Panc1 (cell line): ENCODE measurements at regions of chr6 and their contacts with region 1.

Region 1: DNA sequence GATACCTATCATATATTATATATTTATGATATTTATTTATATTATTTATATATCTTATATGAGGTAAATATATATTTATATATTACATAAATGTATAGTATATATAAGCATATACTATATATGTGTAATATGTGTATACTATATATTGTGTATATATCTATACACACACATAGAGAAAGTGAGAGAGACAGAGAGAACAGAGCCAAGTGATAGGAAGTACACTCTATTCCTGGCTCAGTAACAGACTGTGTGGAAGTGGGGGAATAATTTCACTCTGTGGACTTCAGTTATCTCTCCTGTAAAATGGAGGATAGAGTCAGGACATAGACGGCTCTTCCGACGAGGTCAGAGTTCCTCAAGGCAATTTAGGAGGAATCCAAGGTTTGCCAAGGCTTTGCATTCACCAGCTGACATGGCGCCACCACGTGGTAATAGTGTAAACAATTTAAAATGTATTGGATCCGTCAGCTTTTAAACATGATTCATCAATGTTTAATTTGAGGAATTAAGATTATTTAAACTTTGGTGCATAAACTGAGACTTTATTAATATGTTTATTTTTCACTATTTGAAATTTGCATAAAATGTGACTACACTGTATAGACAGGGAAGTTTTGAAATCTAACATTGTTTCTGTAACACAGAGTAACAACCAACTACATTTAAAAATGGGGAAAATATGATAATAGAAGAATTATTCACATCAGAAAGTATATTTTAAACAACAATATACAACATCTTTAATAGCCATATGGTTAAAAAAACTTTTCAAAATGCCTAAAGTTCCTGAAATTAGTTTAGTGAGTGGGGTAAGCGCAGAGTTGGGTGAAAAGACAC is 75.4 kb upstream of the TMEM244 start:
- DNase-seq: peak; percentile 25
- ATAC-seq: peak; percentile 82; the same call in 1 of the 2 replicates
- H3K4me3 ChIP-seq: 0 out of 4 replicates have a peak overlapping the region, but pooled peaks of 1 of the 2 experiments have one; percentile 24
- H3K27ac ChIP-seq: no peak overlapping the region
- H3K4me1 ChIP-seq: no peaks in the 10 kb centered on the region
- H3K27me3 ChIP-seq: peaks cover 2% of the 10 kb centered on the region
- CTCF ChIP-seq: peak; percentile 83

Region 2: GRCh38 chr6:129893640-129894039 is 42.9 kb before region 1 on chr6:
- CTCF ChIA-PET with region 1: no interaction called
- POLR2A ChIA-PET with region 1: no interaction called
- in situ Hi-C with region 1: no loop called
- intact Hi-C with region 1: loop called (anchors 5 kb)
- DNase-seq: no peak
- ATAC-seq: no peak
- H3K4me3 ChIP-seq: no peak overlapping the region
- H3K27ac ChIP-seq: no peak overlapping the region
- H3K4me1 ChIP-seq: no peaks in the 10 kb centered on the region
- H3K27me3 ChIP-seq: no peaks in the 10 kb centered on the region
- CTCF ChIP-seq: peak; percentile 24; the same call in 1 of the 2 replicates